HepG2 (cell line): ENCODE measurements at regions of chr4 and their contacts with region 1.

Region 1: GRCh38 chr4:113394730-113395530 is 345.5 kb downstream of the ANK2 start:
- DNase-seq: peak; percentile 88
- ATAC-seq: peak; percentile 93
- H3K4me3 ChIP-seq: peak overlapping the region in 1 of 3 experiments; percentile 12; a peak in 1 of 6 replicates
- H3K27ac ChIP-seq: no peak overlapping the region
- H3K4me1 ChIP-seq: peaks cover 38% of the 10 kb centered on the region
- H3K27me3 ChIP-seq: no peaks in the 10 kb centered on the region
- CTCF ChIP-seq: peak; percentile 89
- EP300 ChIP-seq: peak in 1 of 2 experiments; percentile 31; a peak in 1 of 4 replicates
- POLR2A ChIP-seq: no peak
- RAD21 ChIP-seq: peak; percentile 81

Region 2: DNA sequence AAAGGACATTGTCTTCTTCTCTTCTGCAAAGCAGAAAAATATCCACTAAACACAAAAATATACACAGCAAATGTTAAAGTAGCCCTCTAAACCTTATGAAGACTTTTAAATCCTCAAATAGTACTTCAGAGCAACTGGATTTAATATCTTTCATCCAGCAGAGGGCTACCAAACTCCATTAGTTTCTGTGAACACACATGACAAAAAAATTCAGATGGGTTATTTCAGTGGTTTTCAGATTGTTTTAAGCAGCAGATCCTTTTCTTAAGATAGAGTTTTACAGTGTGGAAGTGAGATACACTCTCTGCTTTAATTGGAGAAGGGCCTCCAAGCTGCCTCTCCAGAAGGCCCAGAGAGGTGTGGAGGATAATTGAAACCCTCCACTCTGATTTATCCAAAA is 288.8 kb before region 1 on chr4:
- CTCF ChIA-PET with region 1: no interaction called
- POLR2A ChIA-PET with region 1: no interaction called
- in situ Hi-C with region 1: no loop called
- intact Hi-C with region 1: loop called (anchors 5 kb)
- DNase-seq: peak; percentile 59
- ATAC-seq: peak; percentile 64; the same call in 2 of the 3 replicates
- H3K4me3 ChIP-seq: no peak overlapping the region
- H3K27ac ChIP-seq: no peak overlapping the region
- H3K4me1 ChIP-seq: peaks cover 19% of the 10 kb centered on the region
- H3K27me3 ChIP-seq: no peaks in the 10 kb centered on the region
- CTCF ChIP-seq: peak; percentile 62
- EP300 ChIP-seq: no peak
- POLR2A ChIP-seq: no peak
- RAD21 ChIP-seq: peak; percentile 67; the same call in 1 of the 2 replicates

Region 3: DNA sequence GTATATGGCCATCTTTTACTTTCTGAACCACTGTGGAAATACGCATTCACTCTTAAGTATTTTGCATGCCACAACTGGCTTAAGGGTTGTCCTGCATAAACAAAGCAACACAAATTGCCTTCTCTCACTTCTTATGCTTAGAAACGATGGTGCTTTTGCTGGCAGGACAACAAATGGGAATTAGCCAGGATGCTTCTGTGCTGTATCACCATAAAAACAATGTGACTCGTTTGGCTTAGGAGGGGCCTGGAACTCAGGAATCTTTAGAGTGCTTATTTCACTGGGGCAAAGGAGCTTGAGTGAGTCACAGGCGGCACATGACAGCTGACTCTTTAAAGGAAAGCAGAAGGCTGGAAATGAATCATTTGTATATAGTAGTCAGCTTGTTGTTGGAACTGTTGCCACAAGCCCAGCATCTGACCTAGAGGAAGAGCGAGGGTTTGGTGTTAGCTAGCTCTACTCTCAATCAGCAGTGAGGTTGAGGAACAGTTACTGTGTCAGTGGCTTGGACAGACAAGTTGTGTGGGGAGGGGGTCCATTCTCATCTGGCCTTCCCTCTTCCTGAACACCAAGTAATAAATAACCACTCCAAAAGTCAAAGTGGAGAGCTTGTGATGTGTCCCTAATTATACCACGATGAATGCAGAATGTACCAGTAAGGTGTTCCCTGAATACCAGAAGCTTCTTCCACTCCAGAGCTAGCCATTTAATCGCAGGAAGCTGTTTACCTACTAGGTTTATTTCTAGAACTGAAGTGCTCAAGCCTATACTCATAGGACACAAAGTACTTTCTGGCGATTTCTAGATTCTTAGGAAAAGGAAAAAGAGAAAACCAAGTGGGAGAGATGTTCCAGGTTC is 73.5 kb after region 1 on chr4:
- CTCF ChIA-PET with region 1: no interaction called
- POLR2A ChIA-PET with region 1: no interaction called
- in situ Hi-C with region 1: no loop called
- intact Hi-C with region 1: no loop called
- DNase-seq: peak; percentile 63
- ATAC-seq: peak; percentile 76
- H3K4me3 ChIP-seq: no peak overlapping the region
- H3K27ac ChIP-seq: no peak overlapping the region
- H3K4me1 ChIP-seq: peaks cover 15% of the 10 kb centered on the region
- H3K27me3 ChIP-seq: no peaks in the 10 kb centered on the region
- CTCF ChIP-seq: no peak
- EP300 ChIP-seq: peak in 1 of 2 experiments; percentile 46; a peak in 1 of 4 replicates
- POLR2A ChIP-seq: no peak
- RAD21 ChIP-seq: no peak

Region 4: DNA sequence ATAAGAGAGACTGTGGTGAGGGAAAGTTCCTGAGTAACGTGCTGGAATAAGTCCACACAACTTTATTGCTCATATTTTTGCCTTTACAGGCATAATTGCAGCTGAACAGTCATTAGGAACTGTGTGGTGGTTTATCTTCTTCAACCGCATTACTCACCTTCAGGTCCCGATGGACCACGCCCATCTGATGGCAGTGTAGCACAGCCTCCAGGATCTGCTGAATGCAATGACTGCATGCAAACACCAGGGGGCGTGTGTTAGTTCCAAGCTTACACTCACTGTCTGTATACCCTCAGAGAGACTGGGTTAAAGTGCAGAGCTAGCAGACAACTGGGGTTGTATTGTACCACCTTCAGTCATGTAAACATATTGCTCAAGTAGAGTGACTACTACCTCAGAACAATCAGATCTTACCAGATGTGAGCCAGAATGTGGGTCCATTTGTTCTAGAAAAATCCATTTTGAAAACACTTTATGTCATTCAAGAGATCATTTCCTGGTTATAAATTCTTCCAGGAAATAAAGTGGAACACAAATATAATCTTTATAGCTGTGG is 152.6 kb after region 1 on chr4:
- CTCF ChIA-PET with region 1: interaction called, 3 read pairs
- POLR2A ChIA-PET with region 1: no interaction called
- in situ Hi-C with region 1: no loop called
- intact Hi-C with region 1: loop called (anchors 1 kb)
- DNase-seq: peak; percentile 97
- ATAC-seq: peak; percentile 100
- H3K4me3 ChIP-seq: no peak overlapping the region
- H3K27ac ChIP-seq: peak overlapping the region; percentile 32
- H3K4me1 ChIP-seq: peaks cover 22% of the 10 kb centered on the region
- H3K27me3 ChIP-seq: no peaks in the 10 kb centered on the region
- CTCF ChIP-seq: peak; percentile 98
- EP300 ChIP-seq: peak in 1 of 2 experiments; percentile 62; a peak in 2 of 4 replicates
- POLR2A ChIP-seq: no peak
- RAD21 ChIP-seq: peak; percentile 87

Region 5: GRCh38 chr4:113761620-113762185 is 366.8 kb after region 1 on chr4 and contains the start of gene CAMK2D:
- CTCF ChIA-PET with region 1: no interaction called
- POLR2A ChIA-PET with region 1: interaction called, 4 read pairs
- in situ Hi-C with region 1: loop called (anchors 10 kb)
- intact Hi-C with region 1: loop called (anchors 1 kb)
- DNase-seq: peak; percentile 85
- ATAC-seq: peak; percentile 73
- H3K4me3 ChIP-seq: peak within 1 kb of the TSS; percentile 70 to 96 (median 94)
- H3K27ac ChIP-seq: peak within 1 kb of the TSS; percentile 95
- H3K4me1 ChIP-seq: peaks cover 57% of the 10 kb centered on the region
- H3K27me3 ChIP-seq: no peaks in the 10 kb centered on the region; a peak in 1 of 5 replicates
- CTCF ChIP-seq: peak; percentile 96
- EP300 ChIP-seq: peak in 1 of 2 experiments; percentile 24; a peak in 2 of 4 replicates
- POLR2A ChIP-seq: peak; percentile 53 to 67; a peak in 3 of 4 replicates
- RAD21 ChIP-seq: peak; percentile 65; the same call in 1 of the 2 replicates
- total RNA-seq, gene CAMK2D: 65.4 and 86.7 TPM in 2 replicates

Region 6: GRCh38 chr4:113901994-113902787 is 507.3 kb after region 1 on chr4:
- CTCF ChIA-PET with region 1: no interaction called
- POLR2A ChIA-PET with region 1: no interaction called
- in situ Hi-C with region 1: loop called (anchors 10 kb)
- intact Hi-C with region 1: loop called (anchors 5 kb)
- DNase-seq: peak; percentile 34
- ATAC-seq: peak; percentile 100
- H3K4me3 ChIP-seq: peak overlapping the region in 1 of 3 experiments; percentile 38; a peak in 1 of 6 replicates
- H3K27ac ChIP-seq: no peak overlapping the region
- H3K4me1 ChIP-seq: peaks cover 11% of the 10 kb centered on the region
- H3K27me3 ChIP-seq: no peaks in the 10 kb centered on the region; a peak in 1 of 5 replicates
- CTCF ChIP-seq: peak; percentile 57
- EP300 ChIP-seq: no peak
- POLR2A ChIP-seq: no peak
- RAD21 ChIP-seq: no peak

Region 7: GRCh38 chr4:113952452-113953029 is 557.6 kb after region 1 on chr4:
- CTCF ChIA-PET with region 1: no interaction called
- POLR2A ChIA-PET with region 1: no interaction called
- in situ Hi-C with region 1: no loop called
- intact Hi-C with region 1: loop called (anchors 2 kb)
- DNase-seq: peak; percentile 54
- ATAC-seq: peak; percentile 99
- H3K4me3 ChIP-seq: no peak overlapping the region
- H3K27ac ChIP-seq: no peak overlapping the region
- H3K4me1 ChIP-seq: no peaks in the 10 kb centered on the region
- H3K27me3 ChIP-seq: no peaks in the 10 kb centered on the region
- CTCF ChIP-seq: peak; percentile 84
- EP300 ChIP-seq: no peak
- POLR2A ChIP-seq: no peak
- RAD21 ChIP-seq: peak; percentile 66

Region 8: GRCh38 chr4:114386637-114387233 is 991.8 kb after region 1 on chr4:
- CTCF ChIA-PET with region 1: no interaction called
- POLR2A ChIA-PET with region 1: no interaction called
- in situ Hi-C with region 1: no loop called
- intact Hi-C with region 1: loop called (anchors 10 kb)
- DNase-seq: peak; percentile 5
- ATAC-seq: peak; percentile 35; the same call in 2 of the 3 replicates
- H3K4me3 ChIP-seq: no peak overlapping the region
- H3K27ac ChIP-seq: no peak overlapping the region
- H3K4me1 ChIP-seq: no peaks in the 10 kb centered on the region
- H3K27me3 ChIP-seq: no peaks in the 10 kb centered on the region
- CTCF ChIP-seq: peak; percentile 66
- EP300 ChIP-seq: no peak
- POLR2A ChIP-seq: no peak
- RAD21 ChIP-seq: no peak